Activated CD8-positive, alpha-beta T cell treated with anti-CD3 and anti-CD28 coated beads for 36 hours (primary cell): ENCODE measurements at regions of chr1 and their contacts with region 1.

Region 1: GRCh38 chr1:235415008-235415904 is 48.0 kb downstream of the TBCE start:
- DNase-seq: peak; percentile 74
- ATAC-seq: peak; percentile 87
- H3K4me3 Mint-ChIP-seq: no peak overlapping the region
- H3K27ac Mint-ChIP-seq: no peak overlapping the region
- H3K4me1 Mint-ChIP-seq: peaks cover 3% of the 10 kb centered on the region
- H3K27me3 Mint-ChIP-seq: no peaks in the 10 kb centered on the region
- CTCF ChIP-seq: peak; percentile 88

Region 2: DNA sequence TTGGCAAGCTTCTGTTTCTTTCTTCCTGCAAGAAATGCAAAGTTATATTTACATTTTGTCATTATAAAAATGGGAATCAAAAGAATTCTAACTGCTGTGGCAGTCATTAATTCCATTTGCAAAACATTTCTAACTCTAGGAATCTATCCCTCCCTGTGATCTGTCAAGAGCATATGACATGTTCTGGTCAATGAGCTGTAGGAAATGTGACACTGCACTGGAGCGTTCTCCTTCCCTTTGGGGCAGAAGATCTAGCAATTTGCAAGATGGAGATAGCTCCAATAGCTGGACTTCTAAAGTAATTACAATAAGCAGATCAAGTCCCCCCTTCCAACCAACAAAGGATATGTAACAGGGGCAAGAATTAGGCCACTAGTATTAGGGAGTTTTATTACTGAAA is 292.9 kb before region 1 on chr1:
- CTCF ChIA-PET with region 1: interaction called, 16 read pairs
- POLR2A ChIA-PET with region 1: no interaction called
- intact Hi-C with region 1: no loop called
- DNase-seq: no peak
- ATAC-seq: no peak
- H3K4me3 Mint-ChIP-seq: no peak overlapping the region
- H3K27ac Mint-ChIP-seq: peak overlapping the region; percentile 34
- H3K4me1 Mint-ChIP-seq: peaks cover 43% of the 10 kb centered on the region
- H3K27me3 Mint-ChIP-seq: no peaks in the 10 kb centered on the region
- CTCF ChIP-seq: no peak

Region 3: DNA sequence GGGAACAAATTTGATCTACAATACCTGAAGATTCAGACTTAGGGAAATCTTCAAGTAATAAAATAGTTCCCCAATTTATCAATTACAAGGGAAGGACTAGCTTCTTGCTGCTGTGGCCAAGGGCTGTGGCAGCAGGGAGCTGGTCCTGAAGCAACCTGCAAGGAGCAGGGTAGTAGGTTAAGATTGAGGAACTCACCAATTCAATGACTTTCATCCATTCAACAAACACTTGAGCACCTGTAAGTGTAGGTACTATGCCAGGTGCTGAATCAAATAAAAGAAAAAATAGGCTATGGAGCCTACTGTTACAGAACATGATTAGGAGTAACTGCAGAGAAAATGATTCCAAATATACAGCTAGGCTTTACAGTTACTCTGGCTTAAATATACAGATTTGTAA is 190.0 kb before region 1 on chr1:
- CTCF ChIA-PET with region 1: interaction called, 12 read pairs
- POLR2A ChIA-PET with region 1: no interaction called
- intact Hi-C with region 1: no loop called
- DNase-seq: no peak
- ATAC-seq: no peak
- H3K4me3 Mint-ChIP-seq: no peak overlapping the region
- H3K27ac Mint-ChIP-seq: no peak overlapping the region
- H3K4me1 Mint-ChIP-seq: peaks cover 2% of the 10 kb centered on the region
- H3K27me3 Mint-ChIP-seq: no peaks in the 10 kb centered on the region
- CTCF ChIP-seq: no peak

Region 4: DNA sequence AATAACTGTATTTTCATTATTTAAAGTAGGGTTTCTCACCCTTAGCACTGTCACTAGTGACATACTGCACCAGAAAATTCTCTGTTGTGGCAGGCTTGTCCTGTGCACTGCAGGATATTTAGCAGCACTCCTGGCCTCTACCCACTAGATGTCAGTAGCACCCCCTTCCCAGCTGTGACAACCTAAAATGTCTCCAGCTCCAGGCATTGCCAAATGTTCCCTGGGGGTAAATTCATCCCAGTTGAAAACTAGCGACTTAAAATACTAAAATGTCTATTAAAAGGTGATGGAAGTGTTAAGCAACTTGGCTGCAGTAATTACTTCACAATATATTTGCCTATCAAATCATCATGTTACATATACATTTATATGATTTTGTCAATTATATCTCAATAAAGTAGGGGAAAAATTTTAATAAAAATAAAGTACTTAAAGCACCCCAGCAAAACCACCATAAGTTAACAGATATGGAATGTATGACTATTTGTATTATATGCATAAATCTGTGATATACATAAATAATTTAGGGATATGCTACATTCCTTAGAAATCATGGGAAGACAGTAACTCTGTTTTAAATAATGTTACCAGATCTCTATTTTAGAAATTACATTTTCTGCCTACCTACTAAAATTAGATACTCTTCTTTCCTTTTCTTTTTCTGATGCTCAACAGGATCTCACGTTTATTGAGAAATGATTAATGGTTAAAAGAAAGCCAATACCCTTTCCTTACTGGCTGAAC is 161.9 kb before region 1 on chr1:
- CTCF ChIA-PET with region 1: interaction called, 56 read pairs
- POLR2A ChIA-PET with region 1: interaction called, 3 read pairs
- intact Hi-C with region 1: loop called (anchors 2 kb)
- DNase-seq: peak; percentile 74
- ATAC-seq: peak; percentile 96
- H3K4me3 Mint-ChIP-seq: no peak overlapping the region
- H3K27ac Mint-ChIP-seq: no peak overlapping the region
- H3K4me1 Mint-ChIP-seq: peaks cover 32% of the 10 kb centered on the region
- H3K27me3 Mint-ChIP-seq: no peaks in the 10 kb centered on the region
- CTCF ChIP-seq: peak; percentile 96

Region 5: GRCh38 chr1:235339746-235340445 is 75.4 kb before region 1 on chr1:
- CTCF ChIA-PET with region 1: interaction called, 11 read pairs
- POLR2A ChIA-PET with region 1: no interaction called
- intact Hi-C with region 1: no loop called
- DNase-seq: no peak
- ATAC-seq: no peak
- H3K4me3 Mint-ChIP-seq: no peak overlapping the region
- H3K27ac Mint-ChIP-seq: no peak overlapping the region
- H3K4me1 Mint-ChIP-seq: peaks cover 26% of the 10 kb centered on the region
- H3K27me3 Mint-ChIP-seq: no peaks in the 10 kb centered on the region
- CTCF ChIP-seq: no peak

Region 6: DNA sequence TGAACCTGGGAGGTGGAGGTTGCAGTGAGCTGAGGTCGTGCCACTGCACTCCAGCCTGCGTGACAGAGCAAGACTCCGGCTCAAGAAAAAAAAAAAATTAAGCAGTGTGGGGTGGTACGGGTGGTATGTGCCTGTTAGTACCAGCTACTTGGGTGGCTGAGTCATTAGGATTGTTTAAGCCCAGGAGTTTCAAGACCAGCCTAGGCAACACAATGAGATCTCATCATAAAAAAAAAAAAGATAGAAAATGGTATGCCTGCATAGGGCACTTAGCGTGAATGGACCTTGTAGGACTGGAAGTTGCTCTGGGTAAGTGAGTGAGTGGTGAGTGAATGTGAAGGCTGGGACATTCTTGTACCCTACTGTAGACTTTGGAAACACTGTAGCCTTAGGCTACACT is 11.1 kb before region 1 on chr1:
- CTCF ChIA-PET with region 1: interaction called, 11 read pairs
- POLR2A ChIA-PET with region 1: interaction called, 3 read pairs
- intact Hi-C with region 1: no loop called
- DNase-seq: no peak
- ATAC-seq: no peak
- H3K4me3 Mint-ChIP-seq: no peak overlapping the region
- H3K27ac Mint-ChIP-seq: no peak overlapping the region
- H3K4me1 Mint-ChIP-seq: peaks cover 8% of the 10 kb centered on the region
- H3K27me3 Mint-ChIP-seq: no peaks in the 10 kb centered on the region
- CTCF ChIP-seq: no peak

Region 7: GRCh38 chr1:235465066-235465465 is 49.8 kb after region 1 on chr1:
- CTCF ChIA-PET with region 1: no interaction called
- POLR2A ChIA-PET with region 1: no interaction called
- intact Hi-C with region 1: no loop called
- DNase-seq: no peak
- ATAC-seq: no peak
- H3K4me3 Mint-ChIP-seq: no peak overlapping the region
- H3K27ac Mint-ChIP-seq: no peak overlapping the region
- H3K4me1 Mint-ChIP-seq: peaks cover 14% of the 10 kb centered on the region
- H3K27me3 Mint-ChIP-seq: no peaks in the 10 kb centered on the region
- CTCF ChIP-seq: no peak

Region 8: DNA sequence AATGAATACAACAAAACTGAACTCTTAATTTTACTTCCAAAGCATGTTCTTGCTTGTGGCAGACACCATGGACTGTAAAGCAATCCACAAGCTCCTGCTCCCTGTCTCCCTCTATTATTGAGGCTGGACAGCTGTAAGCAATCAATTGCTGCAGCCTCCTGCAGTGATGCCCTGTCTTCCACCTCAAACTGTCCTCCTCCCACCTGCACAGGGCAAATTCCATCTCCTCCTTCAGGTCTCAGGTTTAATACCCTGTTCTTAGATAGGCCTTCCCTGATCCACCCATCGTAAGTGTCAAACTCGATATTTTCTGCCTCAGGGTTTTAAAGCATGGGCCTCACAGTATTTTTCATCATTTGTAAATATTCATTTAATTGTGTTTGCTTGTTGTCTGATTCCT is 369.7 kb after region 1 on chr1:
- CTCF ChIA-PET with region 1: no interaction called
- POLR2A ChIA-PET with region 1: no interaction called
- intact Hi-C with region 1: no loop called
- DNase-seq: no peak
- ATAC-seq: no peak
- H3K4me3 Mint-ChIP-seq: no peak overlapping the region
- H3K27ac Mint-ChIP-seq: no peak overlapping the region
- H3K4me1 Mint-ChIP-seq: no peaks in the 10 kb centered on the region
- H3K27me3 Mint-ChIP-seq: no peaks in the 10 kb centered on the region
- CTCF ChIP-seq: no peak